ENCODE measurements at regions of chr20 and their contacts with region 1.

Region 1: DNA sequence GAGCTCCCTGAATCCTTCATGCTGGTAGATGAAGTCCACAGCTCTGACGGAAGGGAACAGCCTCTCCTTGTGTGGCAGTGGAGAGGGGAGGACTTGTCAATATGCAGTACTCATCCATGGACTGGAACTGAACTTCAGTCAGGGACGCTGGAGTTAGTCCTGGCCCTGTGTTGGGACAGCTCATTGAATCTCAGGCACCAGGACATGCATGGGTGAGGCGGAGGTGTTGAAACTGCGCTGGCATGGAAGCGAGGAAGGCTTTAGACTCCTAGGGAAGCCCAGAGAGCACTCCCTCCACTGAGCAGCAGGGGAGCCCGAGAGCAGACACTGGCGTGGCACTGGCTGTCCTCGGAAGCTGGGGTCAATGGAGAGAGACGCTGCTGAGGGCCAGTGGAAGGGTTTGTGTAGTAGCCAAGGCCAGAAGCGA is 161.3 kb upstream of the GGTLC1 start:
- DNase-seq: no peak
- H3K4me3 ChIP-seq: no peak overlapping the region
- H3K27ac ChIP-seq: no peak overlapping the region
- H3K4me1 ChIP-seq: peaks cover 0 to 5% (median 0%) of the 10 kb centered on the region in 6 donors
- H3K27me3 ChIP-seq: peaks cover 0 to 8% (median 0%) of the 10 kb centered on the region in 7 donors
- CTCF ChIP-seq: peak in 8 of 11 experiments; percentile 15 to 57 (median 42)
- POLR2A ChIP-seq: no peak

Region 2: GRCh38 chr20:24917797-24918578 is 768.1 kb after region 1 on chr20:
- intact Hi-C with region 1: loop called (anchors 10 kb)
- DNase-seq: peak; percentile 86
- H3K4me3 ChIP-seq: peak overlapping the region in 1 of 8 donors; percentile 35
- H3K27ac ChIP-seq: no peak overlapping the region
- H3K4me1 ChIP-seq: peaks cover 0 to 13% (median 7%) of the 10 kb centered on the region in 6 donors
- H3K27me3 ChIP-seq: peaks cover 0 to 12% (median 0%) of the 10 kb centered on the region in 7 donors
- CTCF ChIP-seq: peak in 10 of 11 experiments; percentile 42 to 88 (median 78)
- POLR2A ChIP-seq: no peak

Measured in spleen (tissue), 13 donors.